AG04450 (cell line): ENCODE measurements at regions of chr12 and their contacts with region 1.

Region 1: GRCh38 chr12:48189331-48190125 is 6.1 kb downstream of the CCDC184 start:
- DNase-seq: no peak
- H3K4me3 ChIP-seq: no peak overlapping the region
- H3K27ac ChIP-seq: no peak overlapping the region
- H3K27me3 ChIP-seq: peaks cover 31% of the 10 kb centered on the region
- CTCF ChIP-seq: peak; percentile 85

Region 2: DNA sequence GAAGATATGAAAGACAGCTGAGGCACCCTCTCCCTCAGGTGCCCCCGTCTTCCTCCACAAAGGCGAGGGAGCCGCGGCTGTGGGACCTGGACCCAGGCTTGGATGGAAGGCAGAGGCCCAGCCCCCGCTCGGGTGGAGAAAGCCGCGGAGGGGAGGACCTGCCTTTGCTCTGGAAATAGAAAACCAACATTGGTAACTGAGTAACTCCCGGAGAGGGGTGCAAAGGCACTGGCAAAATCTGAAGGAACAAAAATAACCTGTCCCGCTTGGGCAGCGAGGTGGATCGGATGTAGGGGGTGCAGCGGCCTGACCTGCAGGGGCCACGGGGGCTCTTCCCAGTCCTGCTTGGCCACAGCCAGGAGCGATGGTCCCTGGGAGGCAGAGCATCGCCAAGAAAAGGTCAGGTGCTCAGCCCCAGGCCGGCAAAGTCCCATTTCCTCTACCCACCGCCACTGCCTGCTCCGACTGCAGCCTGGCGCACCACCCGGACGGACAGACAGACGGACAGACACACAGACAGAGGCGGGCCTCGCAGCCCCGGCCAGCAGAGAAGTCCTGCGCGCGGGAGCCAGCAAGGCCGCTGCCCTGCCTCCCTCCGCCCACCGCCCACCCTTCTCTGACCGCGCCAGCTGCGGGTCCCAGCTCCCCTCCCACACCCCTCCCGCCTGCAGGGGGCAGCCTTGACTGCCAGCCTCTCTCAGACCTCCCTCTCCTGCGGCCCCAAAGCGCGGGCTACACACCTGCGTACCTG is 247.5 kb before region 1 on chr12:
- CTCF ChIA-PET with region 1: no interaction called
- POLR2A ChIA-PET with region 1: no interaction called
- DNase-seq: no peak
- H3K4me3 ChIP-seq: no peak overlapping the region
- H3K27ac ChIP-seq: no peak overlapping the region
- H3K27me3 ChIP-seq: peaks cover 9% of the 10 kb centered on the region
- CTCF ChIP-seq: no peak

Region 3: GRCh38 chr12:48175613-48176416 is 13.7 kb before region 1 on chr12:
- CTCF ChIA-PET with region 1: interaction called, 18 read pairs
- POLR2A ChIA-PET with region 1: no interaction called
- DNase-seq: no peak
- H3K4me3 ChIP-seq: no peak overlapping the region
- H3K27ac ChIP-seq: no peak overlapping the region
- H3K27me3 ChIP-seq: peaks cover 33% of the 10 kb centered on the region
- CTCF ChIP-seq: no peak

Region 4: DNA sequence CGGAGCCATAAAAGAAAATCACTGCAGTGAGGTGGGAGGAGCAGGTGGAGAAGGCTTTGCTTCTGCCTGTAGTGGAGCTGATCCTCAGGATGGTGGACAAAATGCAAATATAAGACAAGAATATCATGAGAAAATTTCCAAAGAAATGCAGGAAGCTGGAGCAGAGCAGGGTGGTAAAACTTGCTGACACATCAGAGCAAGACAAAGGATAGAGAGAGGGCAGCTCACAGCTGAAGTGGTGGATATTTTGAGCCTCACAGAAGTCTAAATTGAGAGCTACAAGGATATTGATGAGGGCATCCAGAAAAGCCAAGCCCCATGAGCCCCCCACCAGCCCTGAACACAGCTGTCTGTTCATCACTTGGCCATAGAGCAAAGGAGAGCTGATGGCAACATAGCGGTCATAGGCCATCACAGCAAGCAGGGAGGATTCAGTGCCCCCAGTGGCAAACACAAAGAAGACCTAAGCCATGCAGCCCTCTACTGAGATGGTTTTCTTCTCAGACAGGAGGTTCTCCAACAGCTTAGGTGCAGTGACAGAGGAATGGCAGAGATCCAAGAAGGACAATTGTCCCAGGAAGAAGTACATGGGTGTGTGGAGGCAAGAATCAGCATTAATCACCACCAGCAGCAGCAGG is 252.8 kb after region 1 on chr12:
- CTCF ChIA-PET with region 1: no interaction called
- POLR2A ChIA-PET with region 1: no interaction called
- DNase-seq: no peak
- H3K4me3 ChIP-seq: no peak overlapping the region
- H3K27ac ChIP-seq: no peak overlapping the region
- H3K27me3 ChIP-seq: no peaks in the 10 kb centered on the region
- CTCF ChIP-seq: no peak